ENCODE measurements at regions of chr14 and their contacts with region 1.

Region 1: GRCh38 chr14:68843471-68844209 is 50.8 kb upstream of the ZFP36L1 start:
- DNase-seq: peak; percentile 42 to 76 (median 68)
- ATAC-seq: peak; percentile 86
- H3K4me3 ChIP-seq: no peak overlapping the region
- H3K4me3 Mint-ChIP-seq: peak overlapping the region in 9 of 10 donors; percentile 30 to 62 (median 48)
- H3K27ac ChIP-seq: no peak overlapping the region
- H3K27ac Mint-ChIP-seq: peak overlapping the region in 3 of 9 donors; percentile 12 to 47 (median 29)
- H3K4me1 ChIP-seq: peaks cover 7 to 12% of the 10 kb centered on the region in 2 donors
- H3K4me1 Mint-ChIP-seq: peaks cover 12 to 34% (median 15%) of the 10 kb centered on the region in 7 donors
- H3K27me3 ChIP-seq: no peaks in the 10 kb centered on the region
- H3K27me3 Mint-ChIP-seq: peaks cover 0 to 9% (median 0%) of the 10 kb centered on the region in 5 donors

Region 2: DNA sequence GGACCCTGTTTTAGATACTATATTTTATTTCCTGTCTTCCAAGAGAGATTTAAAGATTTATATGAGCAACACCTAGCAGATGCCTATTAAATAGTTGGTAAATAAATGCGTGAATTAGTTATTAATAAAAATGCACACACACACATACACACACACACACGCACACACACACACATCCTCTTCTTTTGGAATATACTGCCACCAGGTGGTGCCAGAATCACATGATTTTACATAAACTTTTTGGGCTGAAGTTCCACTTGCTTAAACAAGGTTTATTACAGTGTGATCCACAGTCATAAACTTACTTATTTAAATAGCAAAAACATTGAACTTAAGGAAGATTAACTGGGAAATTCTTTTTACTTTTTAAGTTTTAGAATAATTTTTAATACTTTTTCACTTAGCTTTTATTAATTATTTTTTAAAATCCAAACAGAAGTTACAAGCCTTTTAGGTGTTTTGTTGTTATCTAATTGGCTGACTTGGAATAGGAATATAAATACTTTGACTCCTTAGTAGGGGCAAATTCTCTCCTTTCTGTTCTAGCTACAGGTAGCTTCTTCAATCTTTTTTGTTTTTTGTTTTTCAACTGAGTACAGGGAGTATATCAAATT is 1006.5 kb before region 1 on chr14:
- CTCF ChIA-PET with region 1: interaction called, 4 read pairs
- POLR2A ChIA-PET with region 1: no interaction called
- intact Hi-C with region 1: loop called (anchors 1 to 5 kb)
- DNase-seq: peak in 7 of 9 donors; percentile 50 to 73 (median 62)
- ATAC-seq: peak; percentile 92
- H3K4me3 ChIP-seq: no peak overlapping the region
- H3K4me3 Mint-ChIP-seq: no peak overlapping the region
- H3K27ac ChIP-seq: no peak overlapping the region
- H3K27ac Mint-ChIP-seq: peak overlapping the region in 2 of 9 donors; percentile 16 to 67
- H3K4me1 ChIP-seq: no peaks in the 10 kb centered on the region
- H3K4me1 Mint-ChIP-seq: peaks cover 0 to 4% (median 0%) of the 10 kb centered on the region in 7 donors
- H3K27me3 ChIP-seq: no peaks in the 10 kb centered on the region
- H3K27me3 Mint-ChIP-seq: no peaks in the 10 kb centered on the region

Region 3: GRCh38 chr14:67883717-67884116 is 959.9 kb before region 1 on chr14:
- CTCF ChIA-PET with region 1: interaction called, 5 read pairs
- POLR2A ChIA-PET with region 1: no interaction called
- intact Hi-C with region 1: loop called in 1 of 2 experiments (anchors 1 kb)
- DNase-seq: peak in 4 of 9 donors; percentile 3 to 9 (median 6)
- ATAC-seq: no peak
- H3K4me3 ChIP-seq: no peak overlapping the region
- H3K4me3 Mint-ChIP-seq: no peak overlapping the region
- H3K27ac ChIP-seq: no peak overlapping the region
- H3K27ac Mint-ChIP-seq: no peak overlapping the region
- H3K4me1 ChIP-seq: peaks cover 0 to 14% of the 10 kb centered on the region in 2 donors
- H3K4me1 Mint-ChIP-seq: peaks cover 13 to 36% (median 28%) of the 10 kb centered on the region in 7 donors
- H3K27me3 ChIP-seq: no peaks in the 10 kb centered on the region
- H3K27me3 Mint-ChIP-seq: no peaks in the 10 kb centered on the region

Region 4: DNA sequence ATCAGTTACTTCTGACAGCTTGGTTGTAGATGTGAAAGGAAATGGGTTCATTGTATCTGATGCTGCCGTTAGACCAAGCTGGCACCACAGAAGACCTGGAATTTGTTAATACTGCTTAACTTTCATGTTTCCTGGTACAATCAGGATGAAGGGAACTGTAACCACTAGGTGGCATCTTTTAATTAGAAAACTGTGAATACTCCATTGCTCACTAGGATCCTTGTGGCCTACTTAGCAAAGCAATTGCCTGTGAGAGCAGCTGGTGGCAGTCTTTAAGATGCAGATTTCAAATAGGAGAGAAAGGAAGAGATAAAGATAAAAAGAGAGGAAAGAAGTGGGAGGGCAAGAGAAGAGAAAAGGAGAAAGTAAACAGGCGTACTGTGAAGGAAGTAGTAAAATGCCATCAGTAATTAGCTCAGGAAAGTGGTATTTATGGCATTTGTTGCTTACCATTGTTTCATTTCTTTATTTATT is 909.6 kb before region 1 on chr14:
- CTCF ChIA-PET with region 1: interaction called, 14 read pairs
- POLR2A ChIA-PET with region 1: no interaction called
- intact Hi-C with region 1: loop called (anchors 1 kb)
- DNase-seq: peak in 7 of 9 donors; percentile 24 to 64 (median 43)
- ATAC-seq: peak; percentile 80
- H3K4me3 ChIP-seq: no peak overlapping the region
- H3K4me3 Mint-ChIP-seq: peak overlapping the region in 2 of 10 donors; percentile 15 to 28
- H3K27ac ChIP-seq: peak overlapping the region; percentile 10
- H3K27ac Mint-ChIP-seq: peak overlapping the region in 7 of 9 donors; percentile 2 to 70 (median 56)
- H3K4me1 ChIP-seq: no peaks in the 10 kb centered on the region
- H3K4me1 Mint-ChIP-seq: peaks cover 3 to 11% (median 9%) of the 10 kb centered on the region in 7 donors
- H3K27me3 ChIP-seq: no peaks in the 10 kb centered on the region
- H3K27me3 Mint-ChIP-seq: no peaks in the 10 kb centered on the region

Region 5: GRCh38 chr14:67943947-67944346 is 899.7 kb before region 1 on chr14:
- CTCF ChIA-PET with region 1: interaction called, 17 read pairs
- POLR2A ChIA-PET with region 1: no interaction called
- intact Hi-C with region 1: loop called (anchors 1 kb)
- DNase-seq: peak in 7 of 9 donors; percentile 22 to 57 (median 49)
- ATAC-seq: peak; percentile 80
- H3K4me3 ChIP-seq: no peak overlapping the region
- H3K4me3 Mint-ChIP-seq: no peak overlapping the region
- H3K27ac ChIP-seq: no peak overlapping the region
- H3K27ac Mint-ChIP-seq: no peak overlapping the region
- H3K4me1 ChIP-seq: no peaks in the 10 kb centered on the region
- H3K4me1 Mint-ChIP-seq: peaks cover 0 to 2% (median 0%) of the 10 kb centered on the region in 7 donors
- H3K27me3 ChIP-seq: no peaks in the 10 kb centered on the region
- H3K27me3 Mint-ChIP-seq: no peaks in the 10 kb centered on the region

Region 6: GRCh38 chr14:68824517-68825347 is 18.9 kb before region 1 on chr14:
- CTCF ChIA-PET with region 1: interaction called, 28 read pairs
- POLR2A ChIA-PET with region 1: interaction called, 3 read pairs
- intact Hi-C with region 1: no loop called
- DNase-seq: peak in 1 of 9 donors; percentile 61
- ATAC-seq: peak; percentile 70
- H3K4me3 ChIP-seq: no peak overlapping the region
- H3K4me3 Mint-ChIP-seq: peak overlapping the region in 1 of 10 donors; percentile 16
- H3K27ac ChIP-seq: no peak overlapping the region
- H3K27ac Mint-ChIP-seq: peak overlapping the region in 2 of 9 donors; percentile 22 to 68
- H3K4me1 ChIP-seq: peaks cover 15 to 27% of the 10 kb centered on the region in 2 donors
- H3K4me1 Mint-ChIP-seq: peaks cover 6 to 38% (median 29%) of the 10 kb centered on the region in 7 donors
- H3K27me3 ChIP-seq: no peaks in the 10 kb centered on the region
- H3K27me3 Mint-ChIP-seq: peaks cover 0 to 10% (median 0%) of the 10 kb centered on the region in 5 donors

Region 7: GRCh38 chr14:68961781-68962584 is 118.3 kb after region 1 on chr14:
- CTCF ChIA-PET with region 1: no interaction called
- POLR2A ChIA-PET with region 1: no interaction called
- intact Hi-C with region 1: no loop called
- DNase-seq: no peak
- ATAC-seq: no peak
- H3K4me3 ChIP-seq: no peak overlapping the region
- H3K4me3 Mint-ChIP-seq: peak overlapping the region in 8 of 10 donors; percentile 29 to 96 (median 48)
- H3K27ac ChIP-seq: no peak overlapping the region
- H3K27ac Mint-ChIP-seq: peak overlapping the region in 8 of 9 donors; percentile 84 to 100 (median 92)
- H3K4me1 ChIP-seq: peaks cover 0 to 94% of the 10 kb centered on the region in 2 donors
- H3K4me1 Mint-ChIP-seq: peaks cover 23 to 100% (median 93%) of the 10 kb centered on the region in 7 donors
- H3K27me3 ChIP-seq: no peaks in the 10 kb centered on the region
- H3K27me3 Mint-ChIP-seq: no peaks in the 10 kb centered on the region